ENCODE measurements at regions of chr7 and their contacts with region 1.

Region 1: DNA sequence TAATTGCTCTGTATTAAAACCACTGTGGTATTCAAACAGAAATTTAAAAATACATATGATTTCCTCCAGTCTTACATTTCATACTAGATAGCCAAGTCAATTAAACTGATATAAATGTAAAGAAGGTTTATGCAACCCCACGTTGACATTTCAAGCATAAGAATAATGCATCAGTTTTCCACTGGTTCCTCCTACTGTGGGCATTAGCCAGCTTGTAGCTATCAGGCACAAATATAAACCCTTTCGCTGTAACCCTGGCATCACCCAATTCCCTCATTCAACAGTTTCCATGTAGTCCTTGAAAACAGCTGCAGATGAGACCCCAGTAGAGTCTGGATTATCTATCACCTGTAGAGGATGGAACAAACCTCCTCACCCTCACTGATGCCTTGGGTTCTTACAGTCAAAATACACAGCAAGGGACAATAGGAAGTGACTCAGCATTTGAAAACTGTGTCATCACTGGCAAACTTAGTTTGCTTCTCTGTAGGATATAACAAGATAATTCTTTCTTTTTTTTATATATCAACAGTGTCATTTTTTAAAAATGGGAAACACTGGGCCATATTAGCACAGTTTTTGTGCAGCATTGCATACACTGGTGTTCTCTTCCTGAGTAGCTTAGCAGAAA is 113.0 kb downstream of the PDE1C start:
- DNase-seq: no peak
- ATAC-seq: peak in 2 of 4 donors; percentile 27 to 48
- H3K4me3 ChIP-seq: no peak overlapping the region
- H3K27ac ChIP-seq: peak overlapping the region in 6 of 12 donors; percentile 12 to 33 (median 29)
- H3K4me1 ChIP-seq: peaks cover 0 to 67% (median 24%) of the 10 kb centered on the region in 12 donors
- H3K27me3 ChIP-seq: no peaks in the 10 kb centered on the region
- CTCF ChIP-seq: no peak
- POLR2A ChIP-seq: no peak

Region 2: DNA sequence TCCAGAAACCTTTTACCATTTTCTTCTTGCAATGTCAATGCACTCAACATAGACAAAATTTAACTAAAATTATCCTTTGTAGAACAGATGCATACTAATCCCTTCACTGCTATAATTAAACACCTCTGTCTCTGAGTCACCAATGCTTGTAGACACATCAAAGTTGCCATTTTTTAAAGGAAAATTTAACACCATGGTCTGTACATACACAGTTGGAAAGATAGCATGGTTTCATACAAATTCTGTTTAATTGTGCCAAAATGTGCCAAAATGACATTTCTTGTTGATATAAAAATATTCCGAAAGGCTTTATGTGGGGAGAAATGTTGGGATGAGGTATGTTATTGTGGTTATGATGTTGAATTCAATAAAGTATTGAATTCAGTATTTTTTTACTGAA is 742.5 kb before region 1 on chr7:
- intact Hi-C with region 1: no loop called
- DNase-seq: no peak
- ATAC-seq: no peak
- H3K4me3 ChIP-seq: no peak overlapping the region
- H3K27ac ChIP-seq: no peak overlapping the region
- H3K4me1 ChIP-seq: no peaks in the 10 kb centered on the region
- H3K27me3 ChIP-seq: peaks cover 0 to 7% (median 0%) of the 10 kb centered on the region in 9 donors
- CTCF ChIP-seq: no peak
- POLR2A ChIP-seq: no peak

Region 3: GRCh38 chr7:31919678-31920369 is 37.4 kb before region 1 on chr7:
- intact Hi-C with region 1: loop called in 1 of 10 experiments (anchors 5 kb)
- DNase-seq: no peak
- ATAC-seq: peak in 3 of 4 donors; percentile 31 to 54 (median 54)
- H3K4me3 ChIP-seq: no peak overlapping the region
- H3K27ac ChIP-seq: peak overlapping the region in 8 of 12 donors; percentile 37 to 72 (median 56)
- H3K4me1 ChIP-seq: peaks cover 0 to 81% (median 21%) of the 10 kb centered on the region in 12 donors
- H3K27me3 ChIP-seq: no peaks in the 10 kb centered on the region
- CTCF ChIP-seq: no peak
- POLR2A ChIP-seq: no peak